Endothelial cell of umbilical vein (primary cell): ENCODE measurements at regions of chr2 and their contacts with region 1.

Region 1: GRCh38 chr2:37537316-37537715 is 134.1 kb downstream of the CDC42EP3 start:
- DNase-seq: no peak
- H3K4me3 ChIP-seq: no peak overlapping the region
- H3K27ac ChIP-seq: no peak overlapping the region
- H3K4me1 ChIP-seq: no peaks in the 10 kb centered on the region
- H3K27me3 ChIP-seq: no peaks in the 10 kb centered on the region
- CTCF ChIP-seq: no peak
- POLR2A ChIP-seq: no peak

Region 2: DNA sequence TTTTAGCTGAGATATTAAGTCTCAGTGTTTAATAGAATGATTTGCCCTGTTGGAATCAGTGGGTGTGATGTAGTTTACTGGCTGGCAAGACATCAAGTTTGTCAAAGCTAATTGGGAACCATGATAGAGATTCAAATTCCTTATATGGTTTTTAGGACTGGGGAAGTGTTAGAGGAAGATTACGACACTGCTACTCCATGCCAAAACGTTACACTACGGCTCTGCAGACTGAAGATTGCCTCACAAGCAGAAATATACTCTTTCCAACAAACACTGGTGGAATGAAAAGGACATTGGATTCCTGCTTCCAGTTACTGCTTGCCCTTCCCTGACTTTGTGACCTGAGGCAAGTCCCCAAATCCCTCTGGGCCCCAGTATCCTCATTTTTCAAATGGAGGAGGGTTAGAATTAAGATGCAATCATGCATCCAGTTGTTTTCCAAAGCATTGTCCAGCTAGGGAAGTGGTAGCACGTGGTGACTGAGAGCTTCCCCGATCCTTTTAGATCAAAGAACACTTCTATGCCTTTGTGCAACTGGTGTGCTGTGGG is 13.4 kb before region 1 on chr2:
- CTCF ChIA-PET with region 1: interaction called, 17 read pairs
- POLR2A ChIA-PET with region 1: no interaction called
- dilution Hi-C with region 1: no loop called
- intact Hi-C with region 1: no loop called
- DNase-seq: peak; percentile 34
- H3K4me3 ChIP-seq: no peak overlapping the region
- H3K27ac ChIP-seq: no peak overlapping the region
- H3K4me1 ChIP-seq: no peaks in the 10 kb centered on the region
- H3K27me3 ChIP-seq: no peaks in the 10 kb centered on the region
- CTCF ChIP-seq: no peak
- POLR2A ChIP-seq: no peak

Region 3: DNA sequence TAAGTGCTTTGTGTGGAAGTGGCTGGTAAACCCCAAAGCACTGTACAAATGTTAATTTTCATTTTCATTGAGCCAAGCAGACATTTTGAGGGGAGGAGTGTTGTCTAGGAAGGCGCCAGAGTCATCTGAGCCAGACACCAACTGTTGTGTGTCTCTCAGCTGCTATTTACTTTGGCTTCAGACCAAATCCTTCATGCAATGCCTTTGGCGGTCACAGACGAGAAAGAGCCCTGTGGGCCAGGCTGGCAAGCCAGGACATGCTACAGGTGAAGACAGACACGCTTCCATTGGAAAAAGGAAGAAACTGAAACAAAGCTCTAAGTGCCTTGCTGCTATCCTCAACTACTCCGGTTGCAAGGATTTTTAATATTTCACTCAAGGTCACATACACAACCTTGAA is 249.5 kb after region 1 on chr2:
- CTCF ChIA-PET with region 1: no interaction called
- POLR2A ChIA-PET with region 1: no interaction called
- dilution Hi-C with region 1: no loop called
- intact Hi-C with region 1: no loop called
- DNase-seq: no peak
- H3K4me3 ChIP-seq: no peak overlapping the region
- H3K27ac ChIP-seq: no peak overlapping the region
- H3K4me1 ChIP-seq: peaks cover 4% of the 10 kb centered on the region
- H3K27me3 ChIP-seq: no peaks in the 10 kb centered on the region
- CTCF ChIP-seq: no peak
- POLR2A ChIP-seq: no peak